B cell (primary cell): ENCODE measurements at regions of chr12 and their contacts with region 1.

Region 1: DNA sequence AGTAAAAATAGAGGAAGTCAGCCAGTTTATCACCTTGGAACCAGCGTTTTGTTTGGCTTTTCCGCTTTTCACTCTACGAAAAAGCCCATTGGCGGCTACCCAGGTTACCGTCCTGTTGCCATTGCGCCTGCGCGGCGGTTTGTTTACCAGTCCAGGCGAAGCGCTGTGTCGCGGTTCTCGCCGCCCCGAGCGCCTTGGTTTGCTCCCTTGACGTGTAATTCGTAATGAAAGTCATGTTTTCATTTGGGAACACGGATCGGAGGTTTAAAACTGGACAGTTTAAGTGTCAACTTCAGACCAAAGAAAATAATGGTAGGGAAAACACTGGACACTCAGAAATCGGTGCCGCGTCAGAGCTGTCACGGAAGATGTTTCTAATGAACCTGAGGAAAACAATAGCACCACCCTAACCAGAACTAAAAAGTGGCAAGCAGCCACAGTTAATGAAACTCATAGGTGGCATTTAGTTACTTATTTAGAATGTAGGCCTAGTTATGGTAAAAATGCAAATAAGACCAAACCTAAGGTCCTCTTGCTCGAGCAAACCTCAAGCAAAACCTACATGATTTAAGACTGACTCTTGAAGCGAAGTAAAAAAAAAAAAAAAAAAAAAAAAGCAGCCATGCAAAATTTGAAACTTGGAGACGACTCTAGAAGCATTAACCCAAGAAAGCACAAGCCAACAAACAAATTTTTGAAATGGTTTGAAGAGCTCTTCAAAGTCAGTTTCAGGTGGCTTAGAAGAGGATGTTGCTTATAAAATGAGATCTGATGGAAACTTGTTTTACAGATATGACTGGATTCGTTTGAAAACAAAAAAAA is 790 bp upstream of the GPR19 start:
- DNase-seq: peak; percentile 95
- ATAC-seq: peak; percentile 86
- H3K4me3 ChIP-seq: peak overlapping the region; percentile 66 to 77 (median 68)
- H3K4me3 Mint-ChIP-seq: peak overlapping the region; percentile 99
- H3K27ac ChIP-seq: peak overlapping the region; percentile 97 to 98
- H3K27ac Mint-ChIP-seq: peak overlapping the region; percentile 100
- H3K4me1 ChIP-seq: peaks cover 15 to 23% of the 10 kb centered on the region in 2 donors
- H3K4me1 Mint-ChIP-seq: peaks cover 32% of the 10 kb centered on the region
- H3K27me3 ChIP-seq: no peaks in the 10 kb centered on the region
- H3K27me3 Mint-ChIP-seq: no peaks in the 10 kb centered on the region
- CTCF ChIP-seq: no peak

Region 2: GRCh38 chr12:12349711-12350665 is 346.8 kb before region 1 on chr12 and contains the start of gene MANSC1:
- CTCF ChIA-PET with region 1: no interaction called
- POLR2A ChIA-PET with region 1: no interaction called
- intact Hi-C with region 1: no loop called
- DNase-seq: peak; percentile 68
- ATAC-seq: peak; percentile 85
- H3K4me3 ChIP-seq: peak within 1 kb of the TSS; percentile 54 to 67 (median 66)
- H3K4me3 Mint-ChIP-seq: peak within 1 kb of the TSS; percentile 83
- H3K27ac ChIP-seq: no peak within 1 kb of the TSS
- H3K27ac Mint-ChIP-seq: peak within 1 kb of the TSS; percentile 27
- H3K4me1 ChIP-seq: peaks cover 11 to 16% of the 10 kb centered on the region in 2 donors
- H3K4me1 Mint-ChIP-seq: peaks cover 16% of the 10 kb centered on the region
- H3K27me3 ChIP-seq: no peaks in the 10 kb centered on the region
- H3K27me3 Mint-ChIP-seq: peaks cover 5% of the 10 kb centered on the region
- CTCF ChIP-seq: peak; percentile 70
- total RNA-seq, gene MANSC1: 0.32 and 0.73 TPM in 2 replicates

Region 3: DNA sequence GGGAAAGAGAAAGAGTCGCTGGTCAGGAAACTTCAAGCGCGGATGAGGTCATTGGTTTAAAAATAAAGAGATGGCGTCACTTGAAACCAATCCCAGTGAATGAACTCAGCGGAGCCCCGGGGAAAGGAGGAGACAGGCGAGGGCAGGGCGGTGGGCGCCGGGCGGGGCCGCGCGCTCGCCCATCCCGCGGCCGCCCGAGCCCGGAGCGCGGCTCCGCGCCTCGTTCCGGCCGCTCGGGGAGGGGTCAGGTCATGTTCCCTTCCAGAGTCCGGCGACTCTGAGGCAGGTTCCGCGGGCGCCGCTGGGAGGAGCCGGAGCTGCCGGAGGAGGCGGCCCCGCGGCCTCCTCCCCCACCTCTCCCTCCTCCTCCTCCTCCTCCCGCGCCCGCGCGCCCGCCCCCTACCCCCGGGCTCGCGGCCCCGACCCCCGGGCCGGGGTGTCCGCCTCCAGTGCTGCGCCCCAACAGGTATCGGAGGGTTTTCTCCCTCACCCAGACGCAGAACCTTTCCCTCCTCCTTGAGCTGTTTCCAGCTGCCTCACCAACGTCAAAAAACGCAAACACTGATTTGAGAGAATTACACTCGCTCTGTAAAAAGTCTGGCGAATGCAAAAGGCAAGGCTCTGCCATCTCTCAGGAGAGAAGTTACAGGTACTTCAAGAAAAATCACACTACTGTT is 134.1 kb before region 1 on chr12 and contains the start of gene DUSP16:
- CTCF ChIA-PET with region 1: no interaction called
- POLR2A ChIA-PET with region 1: no interaction called
- intact Hi-C with region 1: loop called (anchors 1 kb)
- DNase-seq: peak; percentile 90
- ATAC-seq: peak; percentile 70
- H3K4me3 ChIP-seq: peak within 1 kb of the TSS; percentile 55 to 78 (median 72)
- H3K4me3 Mint-ChIP-seq: peak within 1 kb of the TSS; percentile 95
- H3K27ac ChIP-seq: peak within 1 kb of the TSS; percentile 38 to 82
- H3K27ac Mint-ChIP-seq: peak within 1 kb of the TSS; percentile 92
- H3K4me1 ChIP-seq: peaks cover 17 to 18% of the 10 kb centered on the region in 2 donors
- H3K4me1 Mint-ChIP-seq: peaks cover 20% of the 10 kb centered on the region
- H3K27me3 ChIP-seq: peaks cover 0 to 9% (median 3%) of the 10 kb centered on the region in 4 experiments
- H3K27me3 Mint-ChIP-seq: peaks cover 8% of the 10 kb centered on the region
- CTCF ChIP-seq: no peak
- total RNA-seq, gene DUSP16: 5.6 and 5.9 TPM in 2 replicates

Region 4: DNA sequence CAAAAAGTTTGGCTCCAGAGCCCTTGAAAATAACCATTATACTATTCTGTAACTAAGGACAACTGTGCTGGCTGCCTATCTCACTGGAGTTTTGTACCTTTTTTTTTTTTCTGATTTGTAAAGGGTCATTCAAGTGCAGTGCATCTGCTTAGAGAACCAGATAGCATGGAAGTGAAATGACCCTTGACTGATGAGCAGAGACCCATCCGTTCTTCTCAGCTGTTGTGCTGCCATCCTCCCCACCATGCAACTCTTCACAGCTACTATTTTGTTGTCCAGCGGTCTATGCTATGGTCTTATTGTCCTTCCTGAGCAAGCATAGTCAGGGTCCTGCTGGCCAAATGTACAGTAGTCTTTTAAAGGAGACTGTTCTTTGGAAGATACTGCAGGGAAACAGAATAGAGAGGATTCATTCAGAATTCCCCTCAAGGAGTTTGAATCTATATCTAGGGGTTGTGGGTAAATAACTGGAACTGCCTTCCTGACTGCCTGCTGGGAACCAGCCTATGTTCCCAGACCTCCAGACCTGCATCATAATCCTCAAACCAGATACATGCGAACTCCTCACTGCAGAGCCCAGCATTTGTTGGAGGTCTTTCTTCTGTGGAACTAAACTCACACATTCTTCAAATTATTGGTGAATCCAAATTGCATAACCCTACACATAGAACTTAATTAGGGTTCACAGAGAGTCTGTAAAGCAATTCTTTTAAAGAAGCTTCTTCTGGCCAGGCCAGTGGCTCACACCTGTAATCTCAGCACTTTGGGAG is 41.9 kb before region 1 on chr12:
- CTCF ChIA-PET with region 1: interaction called, 7 read pairs
- POLR2A ChIA-PET with region 1: no interaction called
- intact Hi-C with region 1: loop called (anchors 5 kb)
- DNase-seq: no peak
- ATAC-seq: no peak
- H3K4me3 ChIP-seq: no peak overlapping the region
- H3K4me3 Mint-ChIP-seq: no peak overlapping the region
- H3K27ac ChIP-seq: no peak overlapping the region
- H3K27ac Mint-ChIP-seq: no peak overlapping the region
- H3K4me1 ChIP-seq: peaks cover 3 to 9% of the 10 kb centered on the region in 2 donors
- H3K4me1 Mint-ChIP-seq: peaks cover 6% of the 10 kb centered on the region
- H3K27me3 ChIP-seq: no peaks in the 10 kb centered on the region
- H3K27me3 Mint-ChIP-seq: no peaks in the 10 kb centered on the region
- CTCF ChIP-seq: no peak

Region 5: DNA sequence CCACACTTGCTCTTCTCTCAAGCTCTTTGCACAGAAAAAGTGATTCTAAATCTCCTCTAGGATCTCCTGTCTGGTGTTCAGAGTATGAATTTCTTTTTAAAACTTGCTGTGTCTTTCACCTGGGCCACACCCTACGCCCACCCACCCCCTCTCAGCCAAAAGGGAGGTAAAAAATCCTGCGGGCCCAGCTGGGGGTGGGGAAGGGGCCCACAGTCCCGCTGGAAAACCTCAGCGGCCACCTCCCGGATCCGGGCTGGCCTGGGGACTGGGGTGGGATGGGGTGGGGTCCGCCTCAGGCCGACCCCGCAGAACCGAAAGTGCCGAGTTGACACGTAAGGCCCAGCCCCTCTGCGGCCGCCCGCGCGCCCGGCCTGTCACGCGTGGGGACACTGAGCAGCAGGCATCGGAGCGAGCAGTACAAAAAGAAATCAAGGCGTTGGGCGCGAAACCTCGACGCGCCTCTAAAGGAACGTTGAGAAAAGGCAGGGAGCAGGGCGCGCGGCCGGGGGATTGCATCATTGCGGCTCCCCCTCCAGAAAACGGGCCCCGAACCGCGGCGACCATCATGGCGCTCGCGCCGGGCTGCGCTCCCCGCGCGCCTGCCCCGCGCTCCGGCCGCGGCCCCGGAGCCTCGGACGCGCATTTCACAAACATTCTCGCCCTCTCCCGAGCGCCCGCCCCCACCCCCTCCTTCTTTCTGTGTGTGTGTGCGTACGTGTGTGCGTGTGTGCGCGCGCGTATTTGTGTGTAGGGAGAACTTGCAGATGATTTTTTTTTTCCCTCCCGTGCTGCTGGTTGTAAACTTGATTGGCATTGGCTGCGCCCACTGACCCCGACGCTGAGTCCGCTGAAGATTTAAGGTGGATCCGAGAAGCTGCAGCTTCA is 28.1 kb after region 1 on chr12:
- CTCF ChIA-PET with region 1: interaction called, 3 read pairs
- POLR2A ChIA-PET with region 1: interaction called, 12 read pairs
- intact Hi-C with region 1: loop called (anchors 1 kb)
- DNase-seq: no peak
- ATAC-seq: peak; percentile 65
- H3K4me3 ChIP-seq: peak overlapping the region; percentile 74 to 88 (median 78)
- H3K4me3 Mint-ChIP-seq: peak overlapping the region; percentile 87
- H3K27ac ChIP-seq: peak overlapping the region; percentile 94 to 97
- H3K27ac Mint-ChIP-seq: peak overlapping the region; percentile 94
- H3K4me1 ChIP-seq: peaks cover 22 to 30% of the 10 kb centered on the region in 2 donors
- H3K4me1 Mint-ChIP-seq: peaks cover 52% of the 10 kb centered on the region
- H3K27me3 ChIP-seq: no peaks in the 10 kb centered on the region
- H3K27me3 Mint-ChIP-seq: no peaks in the 10 kb centered on the region
- CTCF ChIP-seq: peak; percentile 10